ENCODE measurements at regions of chr11 and their contacts with region 1.

Region 1: GRCh38 chr11:121194731-121195596 is 93.9 kb downstream of the TECTA start:
- DNase-seq: no peak
- ATAC-seq: peak; percentile 79

Region 2: DNA sequence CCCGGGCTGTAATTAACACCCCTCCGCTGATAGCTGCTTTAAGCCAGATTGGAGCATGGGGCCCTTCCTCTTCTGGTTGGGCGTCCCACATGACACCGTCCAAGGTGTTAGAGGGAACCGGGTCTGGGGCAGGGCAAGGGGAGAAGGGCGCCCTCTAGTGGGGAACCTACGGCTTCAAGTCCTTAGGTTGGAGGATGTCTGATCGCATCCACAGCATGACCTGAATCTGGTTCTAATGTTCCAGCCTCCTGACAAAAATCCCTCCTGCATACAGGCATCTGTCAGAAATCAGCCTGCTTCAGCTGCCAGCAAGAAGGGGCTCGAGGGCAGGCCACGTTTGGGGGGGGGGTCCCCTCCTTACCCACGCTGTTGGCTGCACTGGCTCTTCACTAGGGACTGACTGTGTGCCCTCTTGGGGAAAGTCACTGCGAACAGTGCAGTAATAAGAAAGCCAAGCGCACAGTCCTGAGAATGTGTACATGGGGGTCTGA is 265.3 kb before region 1 on chr11:
- intact Hi-C with region 1: loop called (anchors 10 kb)
- DNase-seq: no peak
- ATAC-seq: peak; percentile 38

Region 3: DNA sequence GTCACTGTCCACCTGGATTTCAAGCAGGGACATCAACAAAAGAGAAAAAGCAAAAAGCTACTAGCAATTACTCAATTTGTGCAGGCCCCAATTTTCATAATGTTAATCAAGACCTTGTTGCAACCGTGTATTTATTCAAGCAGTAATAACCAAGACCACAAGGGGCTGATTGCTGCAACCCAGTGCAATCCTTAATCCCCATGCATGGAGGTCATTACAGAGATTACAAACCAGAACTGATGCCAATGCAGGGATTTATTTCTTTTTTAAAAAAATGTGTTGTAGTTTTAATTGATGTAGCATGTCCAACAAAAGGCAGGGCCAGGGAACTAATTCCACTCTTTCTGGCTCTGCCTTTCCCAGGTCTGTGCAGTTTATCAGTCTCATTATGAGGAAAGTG is 75.5 kb before region 1 on chr11:
- intact Hi-C with region 1: loop called (anchors 5 kb)
- DNase-seq: no peak
- ATAC-seq: no peak

Region 4: GRCh38 chr11:121572571-121573059 is 377.7 kb after region 1 on chr11:
- intact Hi-C with region 1: no loop called
- DNase-seq: no peak
- ATAC-seq: no peak